H1 (cell line): ENCODE measurements at regions of chr2 and their contacts with region 1.

Region 1: DNA sequence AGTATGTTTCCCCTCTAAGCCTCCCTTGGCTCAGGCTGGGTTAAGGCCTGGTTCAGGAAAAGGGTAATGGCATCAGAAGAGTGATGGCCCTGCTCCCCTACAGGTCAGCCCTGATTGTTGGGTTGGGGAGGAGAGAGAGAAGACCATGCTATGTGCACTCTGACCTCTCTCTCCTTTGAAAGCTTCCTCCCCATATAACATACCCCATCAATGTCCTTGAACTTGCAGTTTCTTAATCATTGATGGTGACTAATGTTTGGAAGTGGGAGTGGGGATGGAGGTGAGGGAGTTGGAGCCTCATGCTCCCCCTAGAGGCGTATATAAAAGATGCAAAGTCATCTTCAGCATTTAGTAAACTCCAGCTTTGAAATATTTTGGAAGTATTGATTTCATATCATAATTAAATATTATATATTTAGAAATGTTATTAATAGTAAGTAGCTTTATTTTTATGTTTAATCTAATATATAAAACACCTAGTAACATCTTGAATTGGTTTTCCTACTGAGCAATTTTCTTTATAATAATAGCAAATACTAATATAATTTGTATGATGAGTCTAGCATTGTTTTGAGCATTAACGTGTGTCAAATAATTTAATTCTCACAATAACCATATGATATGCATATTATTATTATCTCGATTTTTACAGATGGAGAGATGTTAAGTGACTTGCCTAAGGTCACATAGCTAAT is 8.8 kb downstream of the PLCL1 start:
- DNase-seq: no peak
- H3K4me3 ChIP-seq: no peak overlapping the region
- H3K27ac ChIP-seq: no peak overlapping the region
- H3K4me1 ChIP-seq: no peaks in the 10 kb centered on the region
- H3K27me3 ChIP-seq: no peaks in the 10 kb centered on the region
- CTCF ChIP-seq: peak; percentile 38 to 53 (median 45); a peak in 3 of 4 replicates
- EP300 ChIP-seq: no peak
- POLR2A ChIP-seq: no peak
- RAD21 ChIP-seq: peak; percentile 21 to 44; a peak in 3 of 4 replicates

Region 2: GRCh38 chr2:197828464-197829135 is 15.4 kb after region 1 on chr2:
- CTCF ChIA-PET with region 1: interaction called, 14 read pairs
- POLR2A ChIA-PET with region 1: no interaction called
- DNase-seq: no peak
- H3K4me3 ChIP-seq: no peak overlapping the region
- H3K27ac ChIP-seq: no peak overlapping the region
- H3K4me1 ChIP-seq: no peaks in the 10 kb centered on the region
- H3K27me3 ChIP-seq: no peaks in the 10 kb centered on the region
- CTCF ChIP-seq: no peak
- EP300 ChIP-seq: no peak
- POLR2A ChIP-seq: no peak
- RAD21 ChIP-seq: no peak

Region 3: DNA sequence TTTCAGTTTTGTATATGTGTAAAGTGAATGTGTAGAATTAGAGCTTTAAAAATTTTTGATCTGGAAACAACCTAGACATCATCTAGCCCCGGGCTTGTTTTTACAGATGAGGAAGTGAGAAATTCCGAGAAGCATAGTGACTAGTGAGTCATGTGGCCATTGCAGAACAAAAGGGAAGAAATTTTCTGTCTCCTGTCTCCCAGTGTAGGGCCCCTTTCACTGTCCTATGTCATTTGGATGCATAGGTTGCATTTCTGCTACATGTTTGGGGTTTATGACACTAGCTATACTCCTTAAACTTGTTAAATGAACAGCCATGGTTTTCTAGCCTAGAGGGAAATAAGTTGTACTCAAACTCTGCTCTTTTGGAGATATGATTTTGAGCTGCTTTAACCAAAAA is 75.8 kb after region 1 on chr2:
- CTCF ChIA-PET with region 1: interaction called, 10 read pairs
- POLR2A ChIA-PET with region 1: no interaction called
- DNase-seq: no peak
- H3K4me3 ChIP-seq: no peak overlapping the region
- H3K27ac ChIP-seq: no peak overlapping the region
- H3K4me1 ChIP-seq: peaks cover 0 to 3% (median 2%) of the 10 kb centered on the region in 4 experiments; a peak in 4 of 7 replicates
- H3K27me3 ChIP-seq: no peaks in the 10 kb centered on the region
- CTCF ChIP-seq: no peak
- EP300 ChIP-seq: no peak
- POLR2A ChIP-seq: no peak
- RAD21 ChIP-seq: no peak

Region 4: GRCh38 chr2:197904446-197904845 is 91.2 kb after region 1 on chr2:
- CTCF ChIA-PET with region 1: no interaction called
- POLR2A ChIA-PET with region 1: no interaction called
- DNase-seq: no peak
- H3K4me3 ChIP-seq: no peak overlapping the region
- H3K27ac ChIP-seq: no peak overlapping the region
- H3K4me1 ChIP-seq: no peaks in the 10 kb centered on the region; a peak in 2 of 7 replicates
- H3K27me3 ChIP-seq: no peaks in the 10 kb centered on the region
- CTCF ChIP-seq: no peak
- EP300 ChIP-seq: no peak
- POLR2A ChIP-seq: no peak
- RAD21 ChIP-seq: no peak